Caco-2 (cell line): ENCODE measurements at regions of chr11 and their contacts with region 1.

Region 1: GRCh38 chr11:124758317-124759203 is 3.5 kb downstream of the ESAM start:
- DNase-seq: peak; percentile 93 to 97
- H3K4me3 ChIP-seq: peak overlapping the region; percentile 33
- H3K4me3 Mint-ChIP-seq: peak overlapping the region; percentile 91
- H3K27ac Mint-ChIP-seq: peak overlapping the region; percentile 46
- H3K4me1 ChIP-seq: peaks cover 19% of the 10 kb centered on the region
- H3K4me1 Mint-ChIP-seq: peaks cover 7% of the 10 kb centered on the region
- H3K27me3 ChIP-seq: no peaks in the 10 kb centered on the region
- H3K27me3 Mint-ChIP-seq: no peaks in the 10 kb centered on the region
- CTCF ChIP-seq: peak; percentile 97 to 99

Region 2: DNA sequence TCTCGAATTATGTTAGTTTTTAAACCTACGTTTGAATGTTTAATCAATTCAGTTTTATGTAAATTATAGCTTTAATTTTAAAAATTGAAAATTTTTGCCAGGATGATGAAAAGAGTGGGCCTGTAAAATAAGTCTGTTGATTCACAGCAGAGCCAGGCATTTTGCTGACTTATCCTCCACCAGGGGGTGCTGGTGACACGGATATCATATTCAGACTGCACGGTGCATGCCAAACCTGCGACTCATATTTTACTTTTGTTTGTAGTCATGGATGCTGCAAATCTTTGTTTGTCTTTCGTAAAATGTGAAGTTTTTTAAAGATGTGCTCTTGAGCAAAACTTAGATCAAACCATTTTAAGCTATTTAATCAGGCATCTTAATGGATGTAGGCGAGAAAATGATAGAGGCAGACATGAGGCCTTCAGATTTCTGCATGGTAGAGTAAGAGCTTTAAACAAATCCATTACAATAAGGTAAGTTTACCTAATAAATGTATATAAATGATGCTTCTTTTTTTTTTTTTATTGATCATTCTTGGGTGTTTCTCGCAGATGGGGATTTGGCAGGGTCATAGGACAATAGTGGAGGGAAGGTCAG is 356.1 kb before region 1 on chr11:
- CTCF ChIA-PET with region 1: no interaction called
- POLR2A ChIA-PET with region 1: no interaction called
- intact Hi-C with region 1: loop called (anchors 1 kb)
- DNase-seq: peak; percentile 84 to 90
- H3K4me3 ChIP-seq: no peak overlapping the region
- H3K4me3 Mint-ChIP-seq: no peak overlapping the region
- H3K27ac Mint-ChIP-seq: peak overlapping the region; percentile 30
- H3K4me1 ChIP-seq: no peaks in the 10 kb centered on the region
- H3K4me1 Mint-ChIP-seq: peaks cover 6% of the 10 kb centered on the region
- H3K27me3 ChIP-seq: no peaks in the 10 kb centered on the region
- H3K27me3 Mint-ChIP-seq: peaks cover 4% of the 10 kb centered on the region
- CTCF ChIP-seq: peak; percentile 88 to 92

Region 3: GRCh38 chr11:124673333-124674167 is 85.0 kb before region 1 on chr11 and contains the starts of genes SIAE and SPA17:
- CTCF ChIA-PET with region 1: interaction called, 49 read pairs
- POLR2A ChIA-PET with region 1: interaction called, 7 read pairs
- intact Hi-C with region 1: loop called (anchors 1 kb)
- DNase-seq: peak; percentile 98 to 99
- H3K4me3 ChIP-seq: peak within 1 kb of the TSS; percentile 55
- H3K4me3 Mint-ChIP-seq: peak within 1 kb of the TSS; percentile 90
- H3K27ac Mint-ChIP-seq: peak within 1 kb of the TSS; percentile 95
- H3K4me1 ChIP-seq: peaks cover 19% of the 10 kb centered on the region
- H3K4me1 Mint-ChIP-seq: no peaks in the 10 kb centered on the region
- H3K27me3 ChIP-seq: no peaks in the 10 kb centered on the region
- H3K27me3 Mint-ChIP-seq: no peaks in the 10 kb centered on the region
- CTCF ChIP-seq: no peak
- total RNA-seq, gene SIAE: 33.7 and 34.1 TPM in 2 replicates
- total RNA-seq, gene SPA17: 3.7 and 4.2 TPM in 2 replicates

Region 4: GRCh38 chr11:124739479-124740276 is 18.9 kb before region 1 on chr11 and contains the start of gene NRGN:
- CTCF ChIA-PET with region 1: interaction called, 11 read pairs
- POLR2A ChIA-PET with region 1: no interaction called
- intact Hi-C with region 1: loop called (anchors 1 kb)
- DNase-seq: peak; percentile 96 to 98
- H3K4me3 ChIP-seq: peak within 1 kb of the TSS; percentile 62
- H3K4me3 Mint-ChIP-seq: peak within 1 kb of the TSS; percentile 65
- H3K27ac Mint-ChIP-seq: no peak within 1 kb of the TSS
- H3K4me1 ChIP-seq: peaks cover 6% of the 10 kb centered on the region
- H3K4me1 Mint-ChIP-seq: peaks cover 6% of the 10 kb centered on the region
- H3K27me3 ChIP-seq: peaks cover 8% of the 10 kb centered on the region
- H3K27me3 Mint-ChIP-seq: peaks cover 40% of the 10 kb centered on the region
- CTCF ChIP-seq: no peak
- total RNA-seq, gene NRGN: 5.7 and 7.8 TPM in 2 replicates

Region 5: DNA sequence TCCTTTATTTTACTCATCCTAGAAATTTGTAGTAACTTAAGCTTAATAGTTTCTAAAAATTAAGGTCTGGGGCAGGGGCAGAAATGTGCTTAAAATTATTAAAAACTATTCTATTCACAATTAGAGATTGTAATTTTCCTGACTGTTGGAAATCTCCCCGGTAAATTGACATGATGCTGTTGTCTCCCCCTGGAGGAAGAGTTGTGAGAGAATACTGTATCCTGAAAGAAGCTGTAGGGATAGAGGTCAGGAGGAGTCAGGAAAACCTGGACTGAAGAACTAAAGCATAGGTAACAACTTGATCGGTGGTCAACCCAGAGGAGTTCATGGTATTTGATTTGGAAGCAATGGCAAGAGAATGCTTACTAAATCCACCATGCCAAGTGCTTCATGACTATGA is 19.7 kb after region 1 on chr11:
- CTCF ChIA-PET with region 1: interaction called, 15 read pairs
- POLR2A ChIA-PET with region 1: no interaction called
- intact Hi-C with region 1: loop called (anchors 2 kb)
- DNase-seq: peak in 1 of 2 experiments; percentile 42
- H3K4me3 ChIP-seq: no peak overlapping the region
- H3K4me3 Mint-ChIP-seq: no peak overlapping the region
- H3K27ac Mint-ChIP-seq: no peak overlapping the region
- H3K4me1 ChIP-seq: no peaks in the 10 kb centered on the region
- H3K4me1 Mint-ChIP-seq: peaks cover 7% of the 10 kb centered on the region
- H3K27me3 ChIP-seq: no peaks in the 10 kb centered on the region
- H3K27me3 Mint-ChIP-seq: no peaks in the 10 kb centered on the region
- CTCF ChIP-seq: peak; percentile 62 to 70

Region 6: DNA sequence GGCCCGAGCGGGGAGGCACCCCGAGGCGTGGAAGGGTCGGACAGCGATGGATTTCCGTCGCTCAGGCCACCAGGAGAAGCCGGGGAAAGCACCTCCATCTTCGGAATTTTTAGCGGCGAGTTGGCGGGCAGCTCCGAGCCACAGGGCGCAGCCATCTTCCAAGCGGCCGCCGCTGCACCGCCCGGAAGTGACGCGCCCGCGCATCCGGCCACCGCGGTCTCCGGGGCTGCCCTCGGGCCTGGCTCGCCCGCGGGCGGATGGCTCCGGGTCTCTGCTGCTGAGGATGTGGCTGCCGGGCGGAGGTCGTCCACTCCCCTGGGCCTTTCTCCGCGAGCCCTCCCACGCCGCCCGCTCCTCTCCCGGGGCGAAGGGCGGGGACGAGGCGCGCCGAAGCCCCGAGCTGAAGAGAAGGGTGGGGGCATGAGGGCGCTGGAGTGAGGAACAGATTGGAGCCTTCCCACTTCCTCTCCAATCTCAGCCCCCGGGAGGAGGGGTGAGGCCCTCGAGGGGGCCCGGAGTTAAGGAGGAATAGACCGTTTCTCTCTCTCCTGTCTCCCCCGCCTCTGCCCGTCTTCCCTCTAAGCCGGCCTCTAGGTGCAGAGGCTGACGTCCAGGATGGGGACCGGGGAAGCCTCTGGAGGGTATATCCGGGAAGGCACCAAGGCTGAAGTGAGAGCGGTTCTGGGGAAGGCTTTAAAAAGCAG is 41.8 kb after region 1 on chr11 and contains the start of gene MSANTD2:
- CTCF ChIA-PET with region 1: interaction called, 25 read pairs
- POLR2A ChIA-PET with region 1: no interaction called
- intact Hi-C with region 1: no loop called
- DNase-seq: peak; percentile 84 to 92
- H3K4me3 ChIP-seq: peak within 1 kb of the TSS; percentile 96
- H3K4me3 Mint-ChIP-seq: peak within 1 kb of the TSS; percentile 81
- H3K27ac Mint-ChIP-seq: peak within 1 kb of the TSS; percentile 65
- H3K4me1 ChIP-seq: peaks cover 17% of the 10 kb centered on the region
- H3K4me1 Mint-ChIP-seq: peaks cover 25% of the 10 kb centered on the region
- H3K27me3 ChIP-seq: no peaks in the 10 kb centered on the region
- H3K27me3 Mint-ChIP-seq: no peaks in the 10 kb centered on the region
- CTCF ChIP-seq: no peak
- total RNA-seq, gene MSANTD2: 28.3 and 33.2 TPM in 2 replicates

Region 7: DNA sequence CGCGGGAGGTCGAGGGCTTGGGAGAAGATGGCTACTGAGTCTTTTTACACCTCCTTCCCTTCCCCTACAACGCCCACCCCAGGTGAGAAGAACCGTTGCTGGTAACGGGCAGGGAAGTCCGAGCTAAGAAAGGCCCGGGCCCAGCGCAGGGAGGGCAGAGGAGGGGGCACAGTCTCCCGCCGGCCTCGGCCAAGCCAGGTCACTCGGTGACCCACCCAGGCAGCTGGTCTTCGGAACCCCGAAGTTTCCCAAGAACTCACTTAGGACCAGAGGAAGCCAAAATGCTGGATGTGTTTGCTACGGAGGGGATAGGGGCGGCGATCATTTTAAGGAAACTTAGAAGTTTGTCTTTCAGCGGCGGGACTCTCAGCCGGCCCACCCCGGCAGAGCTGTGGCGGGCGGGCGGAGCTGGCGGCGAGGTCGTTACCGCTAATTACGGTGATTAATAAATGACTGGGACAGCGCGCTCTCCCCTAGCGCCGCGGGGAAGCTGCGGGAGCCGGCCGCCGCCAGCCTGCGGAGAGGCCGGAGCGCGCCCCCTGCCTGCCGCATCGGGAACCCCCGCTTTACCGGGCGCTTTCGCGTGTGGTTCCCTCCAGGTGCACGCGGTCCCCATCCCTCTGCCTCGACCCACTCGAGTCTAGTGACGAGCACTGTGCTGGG is 107.5 kb after region 1 on chr11:
- CTCF ChIA-PET with region 1: interaction called, 9 read pairs
- POLR2A ChIA-PET with region 1: no interaction called
- intact Hi-C with region 1: loop called (anchors 1 kb)
- DNase-seq: peak; percentile 58 to 83
- H3K4me3 ChIP-seq: peak overlapping the region; percentile 19
- H3K4me3 Mint-ChIP-seq: peak overlapping the region; percentile 32
- H3K27ac Mint-ChIP-seq: no peak overlapping the region
- H3K4me1 ChIP-seq: peaks cover 22% of the 10 kb centered on the region
- H3K4me1 Mint-ChIP-seq: peaks cover 7% of the 10 kb centered on the region
- H3K27me3 ChIP-seq: peaks cover 16% of the 10 kb centered on the region
- H3K27me3 Mint-ChIP-seq: peaks cover 48% of the 10 kb centered on the region
- CTCF ChIP-seq: peak; percentile 91 to 98

Region 8: DNA sequence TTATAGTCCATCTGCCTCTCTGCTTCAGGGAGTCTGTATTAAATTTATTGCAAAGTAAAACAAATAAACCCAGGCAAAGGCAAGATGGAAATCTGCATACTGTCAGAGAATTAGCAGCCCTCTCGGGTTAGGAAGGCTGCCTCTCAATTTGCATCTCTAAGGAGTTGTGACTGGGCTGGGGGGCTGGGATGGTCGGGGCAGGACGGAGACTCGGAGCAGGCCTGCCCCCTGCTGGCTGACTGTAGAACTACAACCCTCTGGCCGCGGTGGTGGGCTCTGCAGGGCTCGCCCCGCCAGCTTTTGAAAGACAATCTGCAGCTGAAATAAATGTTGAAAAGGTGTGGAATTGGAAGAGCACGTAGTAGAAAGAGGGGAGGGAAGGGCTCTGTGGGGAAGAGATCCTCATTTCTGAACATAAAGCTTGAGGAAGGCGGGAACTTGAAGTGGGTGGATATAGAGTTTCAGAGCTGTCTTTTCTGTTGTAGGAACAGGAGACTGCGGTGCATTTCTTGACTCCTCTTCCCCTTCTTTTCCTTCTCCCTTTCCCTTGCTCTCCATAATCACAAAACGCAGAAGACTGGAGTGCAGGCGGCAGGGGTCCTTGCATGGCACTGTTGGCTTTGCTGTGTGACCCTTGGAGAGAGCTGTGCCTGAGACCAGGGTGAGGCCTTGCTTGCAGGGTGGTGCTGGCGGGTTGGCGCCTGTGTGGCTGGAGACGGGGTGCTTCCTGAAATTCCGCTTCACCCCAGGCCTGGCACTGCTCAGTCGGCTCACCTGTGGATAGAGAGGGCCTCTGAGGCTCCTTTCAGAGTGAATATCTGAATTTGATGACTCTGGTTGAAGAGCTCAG is 383.4 kb after region 1 on chr11:
- CTCF ChIA-PET with region 1: no interaction called
- POLR2A ChIA-PET with region 1: no interaction called
- intact Hi-C with region 1: no loop called
- DNase-seq: peak; percentile 56 to 82
- H3K4me3 ChIP-seq: no peak overlapping the region
- H3K4me3 Mint-ChIP-seq: no peak overlapping the region
- H3K27ac Mint-ChIP-seq: no peak overlapping the region
- H3K4me1 ChIP-seq: 0 out of 2 replicates have a peak, but pooled peaks cover 5% of the 10 kb centered on the region
- H3K4me1 Mint-ChIP-seq: no peaks in the 10 kb centered on the region
- H3K27me3 ChIP-seq: no peaks in the 10 kb centered on the region
- H3K27me3 Mint-ChIP-seq: peaks cover 7% of the 10 kb centered on the region
- CTCF ChIP-seq: peak; percentile 98 to 100